ENCODE measurements at regions of chr3 and their contacts with region 1.

Region 1: DNA sequence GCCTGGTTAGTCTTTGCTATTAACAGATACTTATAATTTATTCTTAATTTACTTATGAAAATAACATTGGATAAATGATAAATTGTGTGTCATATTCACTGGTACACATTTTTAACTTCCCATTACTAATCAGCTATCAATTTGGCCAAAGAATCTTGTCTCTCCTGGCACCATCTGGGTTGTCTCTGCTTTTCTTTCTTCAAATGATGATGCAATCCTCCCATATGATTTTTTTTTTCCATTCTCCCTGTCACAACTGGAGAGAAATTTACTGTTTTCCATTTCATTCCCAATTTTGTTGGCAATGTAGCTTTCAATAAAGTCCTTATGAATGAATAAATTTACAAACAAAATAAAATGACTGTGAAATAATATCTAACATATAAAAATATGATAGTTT is 743.7 kb upstream of the EPHA6 start:
- DNase-seq: no peak

Region 2: GRCh38 chr3:94596887-94597566 is 1473.6 kb before region 1 on chr3:
- intact Hi-C with region 1: loop called in 1 of 2 experiments (anchors 5 kb)
- DNase-seq: no peak

Region 3: GRCh38 chr3:96039632-96040031 is 31.0 kb before region 1 on chr3:
- intact Hi-C with region 1: no loop called
- DNase-seq: no peak

Measured in posterior vena cava (tissue), 2 donors.